CD4-positive, alpha-beta memory T cell (primary cell): ENCODE measurements at regions of chr7 and their contacts with region 1.

Region 1: GRCh38 chr7:7182156-7183060 is at the start of gene C1GALT1:
- DNase-seq: peak; percentile 97 to 99 (median 98)
- H3K4me3 ChIP-seq: peak within 1 kb of the TSS; percentile 55 to 60
- H3K4me3 Mint-ChIP-seq: peak within 1 kb of the TSS; percentile 83 to 99 (median 94)
- H3K27ac ChIP-seq: peak within 1 kb of the TSS; percentile 96
- H3K27ac Mint-ChIP-seq: peak within 1 kb of the TSS; percentile 94 to 98 (median 97)
- H3K4me1 ChIP-seq: peaks cover 50% of the 10 kb centered on the region
- H3K4me1 Mint-ChIP-seq: peaks cover 12 to 21% (median 17%) of the 10 kb centered on the region in 4 donors
- H3K27me3 ChIP-seq: no peaks in the 10 kb centered on the region
- H3K27me3 Mint-ChIP-seq: no peaks in the 10 kb centered on the region
- total RNA-seq, gene C1GALT1: 54.6 to 54.8 TPM

Region 2: DNA sequence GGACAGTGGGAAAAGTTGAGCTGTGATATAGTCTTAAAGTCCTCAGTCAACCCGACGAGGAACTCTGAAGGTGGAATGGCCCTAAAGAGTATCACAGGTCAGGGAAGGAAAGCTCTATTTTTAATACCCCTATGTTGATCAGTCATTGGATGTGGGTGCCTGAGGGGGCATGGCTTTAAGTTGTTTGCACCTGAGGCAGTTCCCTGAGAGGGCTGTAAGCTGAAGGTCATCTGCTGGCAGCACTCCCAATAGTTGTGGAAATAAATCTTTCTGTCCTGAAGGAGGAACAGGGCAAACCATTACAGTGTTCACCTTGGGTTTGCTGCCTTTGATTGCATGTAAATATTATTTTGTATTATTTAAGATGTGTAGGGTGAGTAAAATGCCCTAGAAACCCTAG is 17.8 kb before region 1 on chr7:
- CTCF ChIA-PET with region 1: interaction called, 31 read pairs
- POLR2A ChIA-PET with region 1: interaction called, 128 read pairs
- intact Hi-C with region 1: no loop called
- DNase-seq: no peak
- H3K4me3 ChIP-seq: no peak overlapping the region
- H3K4me3 Mint-ChIP-seq: no peak overlapping the region
- H3K27ac ChIP-seq: no peak overlapping the region
- H3K27ac Mint-ChIP-seq: no peak overlapping the region
- H3K4me1 ChIP-seq: peaks cover 26% of the 10 kb centered on the region
- H3K4me1 Mint-ChIP-seq: peaks cover 21 to 35% (median 26%) of the 10 kb centered on the region in 4 donors
- H3K27me3 ChIP-seq: no peaks in the 10 kb centered on the region
- H3K27me3 Mint-ChIP-seq: no peaks in the 10 kb centered on the region

Region 3: DNA sequence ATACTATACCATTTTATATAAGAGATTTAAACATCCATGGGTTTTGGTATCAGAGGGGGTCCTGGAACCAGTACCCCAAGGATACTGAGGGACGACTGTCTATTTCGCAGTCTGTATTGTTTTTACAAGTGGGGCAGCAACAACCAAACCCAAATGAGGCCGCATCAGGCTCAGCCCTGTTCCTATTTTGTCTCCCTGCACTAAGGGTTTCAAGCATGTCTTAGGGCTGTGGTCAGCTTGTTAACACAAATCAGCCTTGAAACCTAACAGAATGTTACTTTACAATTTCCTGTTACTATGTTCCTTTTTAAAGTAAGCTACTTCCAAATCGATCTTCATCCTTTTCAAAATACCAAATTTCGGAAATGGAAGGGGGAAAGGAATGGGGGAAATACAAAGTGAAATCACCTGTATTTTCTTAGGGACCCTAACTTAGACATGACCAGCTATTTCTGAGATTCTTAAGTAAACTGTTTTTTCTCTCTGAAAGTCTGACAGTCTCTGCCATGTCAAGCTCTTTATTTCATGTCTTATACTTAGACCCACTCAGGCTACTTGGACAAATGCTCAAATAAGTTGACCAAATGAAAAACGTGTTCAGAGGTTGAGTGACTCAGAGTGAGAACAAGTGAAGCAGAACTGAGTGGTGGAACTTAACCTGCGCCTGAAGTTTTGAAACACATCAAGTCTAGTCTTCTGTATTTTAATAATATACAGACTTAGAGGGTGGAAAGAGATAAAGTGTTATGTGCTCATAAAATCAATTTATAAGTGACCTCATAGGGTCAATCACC is 75.7 kb after region 1 on chr7:
- CTCF ChIA-PET with region 1: interaction called, 6 read pairs
- POLR2A ChIA-PET with region 1: interaction called, 32 read pairs
- intact Hi-C with region 1: loop called (anchors 1 kb)
- DNase-seq: no peak
- H3K4me3 ChIP-seq: no peak overlapping the region
- H3K4me3 Mint-ChIP-seq: peak overlapping the region; percentile 49 to 86 (median 82)
- H3K27ac ChIP-seq: peak overlapping the region; percentile 69
- H3K27ac Mint-ChIP-seq: peak overlapping the region; percentile 76 to 95 (median 91)
- H3K4me1 ChIP-seq: peaks cover 22% of the 10 kb centered on the region
- H3K4me1 Mint-ChIP-seq: peaks cover 24 to 44% (median 31%) of the 10 kb centered on the region in 4 donors
- H3K27me3 ChIP-seq: no peaks in the 10 kb centered on the region
- H3K27me3 Mint-ChIP-seq: no peaks in the 10 kb centered on the region

Region 4: DNA sequence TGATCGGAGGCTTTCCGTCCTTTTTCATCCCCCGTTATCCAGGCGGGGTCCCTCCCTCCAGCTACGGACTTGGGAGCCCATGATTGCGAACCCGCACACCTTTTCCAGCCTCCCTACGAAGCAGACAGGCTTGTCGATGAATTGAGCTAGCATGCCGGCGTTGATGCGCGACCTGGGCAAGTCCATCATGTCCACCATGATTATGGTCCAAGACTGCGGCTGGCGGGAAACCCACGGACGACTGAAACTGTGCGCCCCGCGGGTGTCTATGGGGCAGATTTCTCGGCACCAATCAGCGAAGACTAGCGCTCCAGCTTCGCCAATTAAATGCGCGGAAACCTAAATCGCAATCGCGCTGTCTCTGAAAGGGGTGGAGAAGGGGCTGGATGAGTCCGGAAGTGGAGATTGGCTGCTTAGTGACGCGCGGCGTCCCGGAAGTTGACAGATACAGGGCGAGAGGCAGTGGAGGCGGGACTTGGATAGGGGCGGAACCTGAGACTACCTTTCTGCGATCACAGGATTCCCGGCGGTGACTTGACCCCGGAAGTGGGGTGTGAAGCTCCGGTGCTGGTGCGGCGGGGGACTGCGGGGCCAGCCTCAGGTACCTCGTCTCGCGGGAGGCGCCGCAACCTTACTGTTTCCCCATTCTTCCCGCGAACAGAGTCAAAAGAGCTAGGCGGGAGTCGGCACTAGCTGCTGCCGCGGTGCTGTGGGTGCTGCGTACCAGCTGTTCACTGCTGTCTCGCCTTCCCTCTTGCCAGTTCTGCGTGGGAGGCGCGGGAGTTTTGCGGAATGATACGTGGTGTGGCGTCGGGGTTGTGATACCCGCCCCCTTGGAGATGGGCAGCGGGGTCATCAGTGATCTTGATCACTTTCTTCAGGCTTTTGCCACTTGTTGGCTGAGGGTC is 458.1 kb after region 1 on chr7 and contains the start of gene UMAD1:
- CTCF ChIA-PET with region 1: interaction called, 5 read pairs
- POLR2A ChIA-PET with region 1: interaction called, 19 read pairs
- intact Hi-C with region 1: loop called (anchors 1 kb)
- DNase-seq: peak; percentile 97 to 100 (median 100)
- H3K4me3 ChIP-seq: peak within 1 kb of the TSS; percentile 79 to 97
- H3K4me3 Mint-ChIP-seq: peak within 1 kb of the TSS; percentile 91 to 98 (median 96)
- H3K27ac ChIP-seq: peak within 1 kb of the TSS; percentile 91
- H3K27ac Mint-ChIP-seq: peak within 1 kb of the TSS; percentile 95 to 99 (median 99)
- H3K4me1 ChIP-seq: peaks cover 28% of the 10 kb centered on the region
- H3K4me1 Mint-ChIP-seq: peaks cover 25 to 62% (median 42%) of the 10 kb centered on the region in 4 donors
- H3K27me3 ChIP-seq: no peaks in the 10 kb centered on the region
- H3K27me3 Mint-ChIP-seq: no peaks in the 10 kb centered on the region
- total RNA-seq, gene UMAD1: 23.5 to 25.1 TPM

Region 5: DNA sequence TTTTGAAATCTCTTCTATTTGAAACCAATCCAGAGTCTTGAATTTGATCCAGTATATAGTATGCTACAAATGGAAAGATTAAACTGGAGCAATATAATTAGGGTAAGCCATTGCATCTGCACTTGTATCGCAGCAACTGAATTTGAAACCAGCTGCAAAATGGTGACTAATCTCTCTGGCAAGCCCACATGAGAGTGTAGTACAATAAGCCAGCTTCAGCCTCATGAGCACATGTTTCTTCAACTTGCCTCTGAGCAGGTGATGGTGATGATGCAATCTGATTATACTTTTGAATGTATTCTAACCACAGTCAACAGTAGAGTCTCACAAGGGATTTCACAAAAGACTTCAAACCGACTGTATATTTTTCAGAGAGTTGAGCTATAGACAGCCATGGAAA is 536.8 kb after region 1 on chr7:
- CTCF ChIA-PET with region 1: no interaction called
- POLR2A ChIA-PET with region 1: no interaction called
- intact Hi-C with region 1: no loop called
- DNase-seq: peak; percentile 1 to 47 (median 9)
- H3K4me3 ChIP-seq: no peak overlapping the region
- H3K4me3 Mint-ChIP-seq: no peak overlapping the region
- H3K27ac ChIP-seq: no peak overlapping the region
- H3K27ac Mint-ChIP-seq: peak overlapping the region in 1 of 7 donors; percentile 22
- H3K4me1 ChIP-seq: peaks cover 11% of the 10 kb centered on the region
- H3K4me1 Mint-ChIP-seq: peaks cover 0 to 8% (median 4%) of the 10 kb centered on the region in 4 donors
- H3K27me3 ChIP-seq: no peaks in the 10 kb centered on the region
- H3K27me3 Mint-ChIP-seq: no peaks in the 10 kb centered on the region

Region 6: GRCh38 chr7:8217200-8218068 is 1035.0 kb after region 1 on chr7:
- CTCF ChIA-PET with region 1: no interaction called
- POLR2A ChIA-PET with region 1: no interaction called
- intact Hi-C with region 1: loop called (anchors 1 kb)
- DNase-seq: peak in 4 of 5 donors; percentile 65 to 69 (median 67)
- H3K4me3 ChIP-seq: no peak overlapping the region
- H3K4me3 Mint-ChIP-seq: no peak overlapping the region
- H3K27ac ChIP-seq: no peak overlapping the region
- H3K27ac Mint-ChIP-seq: peak overlapping the region in 2 of 7 donors; percentile 26 to 47
- H3K4me1 ChIP-seq: no peaks in the 10 kb centered on the region
- H3K4me1 Mint-ChIP-seq: peaks cover 0 to 4% (median 2%) of the 10 kb centered on the region in 4 donors
- H3K27me3 ChIP-seq: no peaks in the 10 kb centered on the region
- H3K27me3 Mint-ChIP-seq: no peaks in the 10 kb centered on the region